Colonic mucosa (tissue), 4 donors: ENCODE measurements at regions of chr17 and their contacts with region 1.

Region 1: GRCh38 chr17:28880572-28880945 is 17.0 kb downstream of the FLOT2 start:
- DNase-seq: no peak
- H3K4me3 ChIP-seq: no peak overlapping the region
- H3K27ac ChIP-seq: no peak overlapping the region
- H3K4me1 ChIP-seq: no peaks in the 10 kb centered on the region
- H3K27me3 ChIP-seq: no peaks in the 10 kb centered on the region
- CTCF ChIP-seq: no peak

Region 2: DNA sequence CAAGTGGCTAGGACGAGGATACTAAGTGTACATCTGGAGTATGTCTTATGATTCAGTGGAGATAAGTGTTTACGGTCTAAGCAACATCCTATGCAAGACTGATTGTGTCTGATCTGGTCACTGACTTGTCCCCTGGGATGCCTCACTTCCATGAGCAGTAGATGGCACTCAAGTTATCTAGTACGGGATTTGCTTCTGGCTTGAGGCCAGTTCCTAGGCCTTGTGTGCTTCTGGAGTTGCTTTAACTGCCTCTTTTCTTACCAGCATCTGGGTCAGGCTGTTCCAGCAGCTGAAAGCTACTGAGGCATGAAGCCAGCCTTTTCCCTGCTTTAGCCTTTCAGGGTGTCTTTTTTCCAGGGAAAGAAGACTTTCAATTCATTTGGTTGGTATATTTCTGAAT is 195.6 kb before region 1 on chr17:
- intact Hi-C with region 1: loop called (anchors 5 kb)
- DNase-seq: peak; percentile 52
- H3K4me3 ChIP-seq: no peak overlapping the region
- H3K27ac ChIP-seq: no peak overlapping the region
- H3K4me1 ChIP-seq: no peaks in the 10 kb centered on the region
- H3K27me3 ChIP-seq: no peaks in the 10 kb centered on the region
- CTCF ChIP-seq: no peak